ENCODE measurements at regions of chr5 and their contacts with region 1.

Region 1: DNA sequence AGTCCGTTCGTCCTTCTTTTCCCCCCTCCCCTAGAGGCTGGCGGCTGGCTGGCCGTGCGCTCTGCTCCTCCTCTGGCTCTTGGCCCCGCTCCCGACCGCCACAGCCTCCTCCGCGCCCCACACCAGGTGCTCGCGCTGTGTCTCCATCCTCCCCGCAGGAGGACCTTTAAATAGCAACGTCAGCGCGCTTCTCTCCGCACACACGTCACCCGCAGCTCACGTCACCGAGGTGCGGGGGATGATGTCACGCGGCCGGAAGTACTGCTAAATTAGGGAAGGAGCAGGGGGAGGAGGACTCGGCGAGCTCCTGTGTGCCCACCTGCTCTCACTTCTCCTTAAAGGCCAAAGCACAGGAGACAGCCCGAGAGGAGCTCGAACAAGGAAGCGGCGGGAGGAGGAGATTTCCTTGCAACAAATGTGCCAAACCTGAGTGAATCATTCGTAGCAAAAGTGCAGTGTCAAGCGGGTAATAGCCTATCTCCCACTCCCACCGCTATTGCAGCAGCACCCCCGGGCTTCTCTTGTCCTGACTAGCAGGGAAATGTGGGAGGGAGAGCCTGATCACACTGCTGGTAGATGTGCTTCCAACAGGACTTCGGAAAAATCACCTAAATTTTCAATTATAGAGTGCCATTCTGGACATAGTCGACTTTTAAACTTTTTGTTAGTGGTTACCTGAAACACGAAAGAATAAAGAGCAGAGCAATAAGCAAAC is 614 bp upstream of the HOMER1 start:
- DNase-seq: peak; percentile 93
- ATAC-seq: peak; percentile 87

Region 2: GRCh38 chr5:79235634-79236363 is 278.7 kb before region 1 on chr5 and contains the start of gene JMY:
- intact Hi-C with region 1: loop called (anchors 5 kb)
- DNase-seq: peak; percentile 94
- ATAC-seq: peak; percentile 95
- total RNA-seq, gene JMY: 9.0 TPM

Region 3: DNA sequence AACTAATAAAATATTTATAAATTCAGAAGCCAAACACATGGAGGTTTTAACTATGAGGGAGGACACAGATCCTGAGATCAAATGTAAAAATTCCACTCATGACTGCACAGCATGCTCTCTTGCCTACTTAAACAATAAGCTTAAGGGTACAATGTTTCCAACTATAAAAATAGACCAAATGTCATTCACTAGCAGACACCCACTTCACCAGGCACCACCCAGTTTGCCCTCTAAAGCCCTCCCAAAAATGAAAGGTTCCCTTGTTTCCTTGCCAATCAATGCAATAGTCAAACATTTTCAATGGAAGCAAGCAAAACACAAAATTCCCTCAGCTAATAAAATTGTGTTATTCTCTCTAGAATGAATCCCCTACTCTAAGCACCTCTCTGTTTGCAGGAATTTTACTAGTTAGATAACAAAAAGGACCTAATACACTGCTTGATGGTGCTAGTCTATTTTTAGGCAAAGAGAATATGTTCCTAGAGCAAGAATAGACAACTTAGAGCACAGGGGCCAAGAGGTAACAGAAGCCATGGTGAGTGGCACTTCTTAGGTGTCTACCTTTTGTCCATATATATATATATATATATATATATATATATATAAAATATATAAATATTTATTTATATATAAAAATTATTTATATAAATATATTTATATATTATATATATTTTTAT is 135.9 kb before region 1 on chr5:
- intact Hi-C with region 1: loop called (anchors 5 kb)
- DNase-seq: no peak
- ATAC-seq: peak; percentile 94

Region 4: DNA sequence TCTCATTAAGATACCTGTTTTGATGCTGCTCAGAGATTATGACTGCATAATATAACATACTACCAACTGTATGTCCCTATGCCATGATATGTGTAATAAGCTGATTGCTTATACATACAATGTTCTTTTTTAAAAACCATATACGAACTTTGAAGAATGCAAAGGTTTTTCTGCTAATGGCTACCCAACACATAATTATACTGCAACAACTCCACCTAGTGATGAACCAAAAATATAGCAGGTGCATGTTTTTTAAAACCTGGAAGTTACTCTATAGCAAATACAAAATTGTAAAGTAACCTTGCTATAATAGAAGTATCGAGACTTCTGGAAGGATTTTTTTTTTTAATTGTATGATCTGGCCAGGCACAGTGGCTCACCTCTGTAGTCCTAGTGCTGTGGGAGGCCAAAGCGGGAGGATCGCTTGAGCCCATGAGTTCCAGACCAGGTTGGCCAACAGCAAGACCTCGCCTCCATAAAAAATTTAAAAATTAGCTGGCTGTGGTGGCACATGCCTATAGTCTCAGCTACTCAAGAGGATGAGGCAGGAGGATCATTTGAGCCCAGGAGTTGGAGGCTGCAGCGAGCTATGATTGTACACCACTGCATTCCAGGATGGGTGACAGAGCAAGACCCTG is 49.7 kb before region 1 on chr5:
- intact Hi-C with region 1: loop called (anchors 5 kb)
- DNase-seq: no peak
- ATAC-seq: peak; percentile 20

Region 5: DNA sequence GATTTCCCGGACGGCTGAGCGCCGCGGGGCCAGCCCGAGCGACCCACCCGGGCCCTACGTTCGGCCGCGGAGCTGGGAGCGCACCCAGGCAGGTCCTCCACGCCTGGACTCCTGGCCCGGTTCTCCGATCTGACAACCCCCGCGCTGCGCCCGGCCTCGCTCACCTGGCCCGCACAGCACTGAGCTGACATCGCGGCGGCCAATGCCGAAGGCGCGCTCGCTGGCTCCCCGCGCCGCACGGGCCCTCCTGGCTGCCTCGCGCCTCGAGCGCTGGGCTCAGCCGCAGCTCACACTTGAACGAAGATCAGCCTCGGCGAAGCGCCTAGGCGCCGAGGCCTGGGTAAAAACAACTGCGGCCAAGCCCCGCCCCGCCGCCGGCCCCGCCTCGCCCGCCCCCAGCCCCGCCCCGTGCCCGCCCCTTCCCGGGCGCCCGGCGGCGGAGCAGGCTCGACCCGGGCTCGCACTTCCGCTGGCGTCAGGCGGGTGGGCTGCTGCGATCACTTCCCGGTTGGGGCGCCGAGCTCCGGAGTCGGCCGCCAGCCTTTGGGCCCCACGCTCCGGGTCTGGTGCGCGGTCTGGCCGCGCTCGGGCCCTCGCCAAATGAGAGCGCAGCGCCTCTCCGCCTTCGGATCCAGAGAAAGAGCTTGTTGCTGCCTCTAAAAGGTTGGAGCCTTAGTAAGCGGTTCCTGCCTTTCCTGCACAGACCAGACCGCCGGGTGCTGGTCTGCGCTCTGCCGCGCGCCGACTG is 741.4 kb after region 1 on chr5 and contains the start of gene SERINC5:
- intact Hi-C with region 1: no loop called
- DNase-seq: peak; percentile 94
- ATAC-seq: peak; percentile 93
- total RNA-seq, gene SERINC5: 14.5 TPM